CD8-positive, alpha-beta memory T cell (primary cell): ENCODE measurements at regions of chr6 and their contacts with region 1.

Region 1: DNA sequence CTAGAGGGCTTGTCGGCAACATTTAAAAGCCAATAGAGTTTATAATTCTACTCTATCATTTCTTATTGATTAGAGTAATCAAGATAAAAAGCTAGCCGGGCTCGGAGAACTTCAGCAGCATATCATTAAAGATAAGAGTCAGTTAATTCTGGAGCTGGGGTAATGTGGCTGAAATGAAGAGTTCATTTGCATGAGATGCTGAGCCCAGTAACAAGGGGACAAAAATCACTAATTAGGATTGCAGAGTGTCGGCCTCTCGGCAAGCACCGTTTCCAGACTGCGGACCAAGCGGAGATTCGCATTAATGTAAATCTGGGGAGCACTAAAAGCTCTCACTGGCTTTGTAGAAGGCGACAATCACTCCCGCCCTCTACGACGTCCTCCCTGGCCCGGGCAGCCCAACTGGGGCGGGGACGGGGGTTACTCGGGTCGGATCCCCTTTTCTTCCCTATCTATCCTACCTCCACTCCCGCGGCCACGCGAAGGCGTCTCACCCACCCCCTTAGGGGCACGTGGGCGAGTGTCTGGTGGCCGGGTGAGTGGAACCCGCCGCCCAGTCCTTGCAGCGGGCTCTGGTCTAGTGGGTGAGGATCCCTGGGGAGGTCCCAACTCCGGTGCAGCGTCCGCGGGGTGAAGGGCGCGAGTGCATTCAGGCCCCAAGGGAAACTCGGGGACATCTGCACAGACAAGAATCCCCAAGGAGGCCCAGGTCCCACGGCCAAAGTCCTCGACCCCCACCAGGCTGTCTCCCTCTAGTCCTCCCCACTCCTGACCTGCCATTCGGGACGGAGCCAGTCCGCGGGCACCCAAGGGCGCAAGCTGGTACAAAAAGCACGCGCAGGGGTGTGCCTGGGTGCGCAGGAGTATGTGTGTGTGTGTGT is 42.2 kb upstream of the OSTM1 start:
- DNase-seq: no peak
- H3K4me3 ChIP-seq: peak overlapping the region; percentile 55
- H3K4me3 Mint-ChIP-seq: peak overlapping the region; percentile 82 to 92 (median 90)
- H3K27ac ChIP-seq: no peak overlapping the region
- H3K27ac Mint-ChIP-seq: peak overlapping the region in 4 of 8 donors; percentile 2 to 63 (median 12)
- H3K4me1 ChIP-seq: peaks cover 44% of the 10 kb centered on the region
- H3K4me1 Mint-ChIP-seq: peaks cover 50 to 55% (median 52%) of the 10 kb centered on the region in 3 donors
- H3K27me3 ChIP-seq: peaks cover 75% of the 10 kb centered on the region
- H3K27me3 Mint-ChIP-seq: peaks cover 86 to 92% of the 10 kb centered on the region in 2 donors

Region 2: DNA sequence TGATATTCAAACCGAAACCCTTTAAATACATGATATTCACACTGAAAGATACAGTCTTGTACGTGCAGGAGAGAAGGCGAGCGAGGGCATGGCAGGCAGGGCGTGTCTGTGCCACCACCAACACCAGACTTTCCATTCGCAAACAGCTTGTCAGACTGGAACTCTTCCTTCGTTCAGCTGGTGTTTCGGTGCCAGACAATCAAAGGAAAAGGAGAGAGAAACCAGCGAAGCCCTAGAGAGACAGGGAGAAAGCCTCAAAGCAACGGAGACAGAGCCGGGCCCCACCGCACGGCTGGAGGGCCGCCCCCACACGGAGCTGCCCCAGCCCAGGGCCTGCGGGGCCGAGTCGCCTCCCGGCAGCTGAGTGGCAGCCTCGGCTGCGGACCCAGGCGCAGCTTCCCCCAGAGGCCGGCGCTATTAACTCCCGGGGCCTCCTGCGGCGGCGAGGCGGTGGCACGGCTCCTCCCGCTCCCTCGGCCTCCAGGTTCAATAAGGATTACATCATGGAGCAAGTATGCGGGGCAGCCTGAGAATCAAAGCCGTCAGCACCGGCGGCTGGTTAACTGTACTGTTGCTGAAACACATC is 16.9 kb after region 1 on chr6:
- CTCF ChIA-PET with region 1: interaction called, 3 read pairs
- POLR2A ChIA-PET with region 1: interaction called, 14 read pairs
- DNase-seq: no peak
- H3K4me3 ChIP-seq: no peak overlapping the region
- H3K4me3 Mint-ChIP-seq: peak overlapping the region; percentile 30 to 90 (median 83)
- H3K27ac ChIP-seq: no peak overlapping the region
- H3K27ac Mint-ChIP-seq: peak overlapping the region in 1 of 8 donors; percentile 31
- H3K4me1 ChIP-seq: no peaks in the 10 kb centered on the region
- H3K4me1 Mint-ChIP-seq: peaks cover 7 to 13% (median 12%) of the 10 kb centered on the region in 3 donors
- H3K27me3 ChIP-seq: peaks cover 27% of the 10 kb centered on the region
- H3K27me3 Mint-ChIP-seq: peaks cover 48 to 74% of the 10 kb centered on the region in 2 donors

Region 3: DNA sequence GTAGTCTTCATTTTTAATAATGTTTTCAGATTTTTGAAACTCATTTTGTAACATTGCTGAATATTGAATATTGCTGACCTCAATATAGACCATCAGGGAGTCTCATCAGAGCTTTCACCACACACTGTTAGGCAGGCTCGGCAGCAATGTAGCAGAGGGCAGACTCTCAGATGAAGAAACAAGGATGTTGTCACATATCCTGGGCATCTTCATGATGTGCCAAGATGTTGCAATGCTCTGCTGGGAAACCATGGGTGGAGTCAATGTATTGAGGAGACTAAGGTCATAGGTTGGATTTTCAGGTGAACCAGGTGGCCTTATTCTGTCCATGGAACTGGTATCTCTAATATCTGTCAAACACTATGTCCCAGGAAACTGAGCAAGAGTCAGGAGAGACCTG is 76.3 kb after region 1 on chr6:
- CTCF ChIA-PET with region 1: no interaction called
- POLR2A ChIA-PET with region 1: no interaction called
- DNase-seq: no peak
- H3K4me3 ChIP-seq: no peak overlapping the region
- H3K4me3 Mint-ChIP-seq: no peak overlapping the region
- H3K27ac ChIP-seq: no peak overlapping the region
- H3K27ac Mint-ChIP-seq: no peak overlapping the region
- H3K4me1 ChIP-seq: no peaks in the 10 kb centered on the region
- H3K4me1 Mint-ChIP-seq: no peaks in the 10 kb centered on the region
- H3K27me3 ChIP-seq: no peaks in the 10 kb centered on the region
- H3K27me3 Mint-ChIP-seq: peaks cover 10 to 33% of the 10 kb centered on the region in 2 donors